ENCODE measurements at regions of chr9 and their contacts with region 1.

Region 1: DNA sequence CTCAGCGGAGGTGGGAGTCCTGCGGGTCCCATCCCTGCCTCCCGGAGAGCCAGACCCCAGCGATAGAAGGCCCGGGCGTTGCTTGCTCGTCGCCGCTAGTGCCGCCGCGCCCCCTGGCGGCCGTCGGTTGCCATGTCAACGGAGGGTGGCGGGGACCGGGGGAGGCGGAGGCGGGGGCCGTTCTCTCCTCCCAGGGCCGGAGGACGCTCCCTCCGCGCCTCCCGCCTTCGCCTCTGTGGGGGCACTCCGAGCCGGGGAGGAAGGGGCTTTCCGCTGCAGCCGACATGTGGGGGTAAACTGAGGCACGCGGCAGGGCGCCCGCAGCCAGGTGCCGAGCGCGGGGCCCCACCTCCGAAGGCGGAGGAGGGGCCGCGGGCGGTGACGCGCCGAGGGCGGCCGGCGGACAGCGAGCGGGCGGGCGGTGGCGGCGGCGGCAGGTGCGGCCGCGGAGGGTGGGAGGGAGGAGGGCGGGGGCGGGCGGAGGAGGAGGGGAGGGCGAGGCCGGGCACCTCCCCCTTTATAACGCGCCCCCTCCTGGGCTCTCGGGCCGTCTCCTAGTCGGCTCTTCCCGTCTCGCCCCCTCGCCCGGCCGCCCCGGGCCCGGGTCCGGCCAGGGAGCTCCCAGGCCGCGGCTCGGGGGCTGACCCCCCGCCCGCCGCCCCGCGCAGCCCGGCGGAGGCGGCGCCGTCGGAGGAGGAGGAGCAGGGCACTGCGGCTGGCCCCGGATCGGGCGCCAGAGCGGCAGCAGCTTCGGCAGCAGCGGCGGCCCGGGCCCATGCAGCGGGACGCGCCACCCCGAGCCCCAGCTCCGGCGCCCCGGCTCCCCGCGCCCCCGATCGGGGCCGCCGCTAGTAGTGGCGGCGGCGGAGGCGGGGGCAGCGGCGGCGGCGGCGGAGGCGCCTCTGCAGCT is 556 bp upstream of the CDK9 start:
- DNase-seq: peak; percentile 93
- ATAC-seq: peak; percentile 76

Region 2: GRCh38 chr9:127734747-127735529 is 50.3 kb before region 1 on chr9 and contains the start of gene TOR2A:
- intact Hi-C with region 1: loop called (anchors 5 kb)
- DNase-seq: peak; percentile 98
- ATAC-seq: peak; percentile 96
- total RNA-seq, gene TOR2A: 3.6 TPM

Region 3: GRCh38 chr9:127869310-127870152 is 84.3 kb after region 1 on chr9:
- intact Hi-C with region 1: loop called (anchors 10 kb)
- DNase-seq: peak; percentile 91
- ATAC-seq: peak; percentile 67

Measured in left ventricle myocardium superior (tissue), 1 donor.